CD4-positive, alpha-beta memory T cell (primary cell): ENCODE measurements at regions of chr11 and their contacts with region 1.

Region 1: DNA sequence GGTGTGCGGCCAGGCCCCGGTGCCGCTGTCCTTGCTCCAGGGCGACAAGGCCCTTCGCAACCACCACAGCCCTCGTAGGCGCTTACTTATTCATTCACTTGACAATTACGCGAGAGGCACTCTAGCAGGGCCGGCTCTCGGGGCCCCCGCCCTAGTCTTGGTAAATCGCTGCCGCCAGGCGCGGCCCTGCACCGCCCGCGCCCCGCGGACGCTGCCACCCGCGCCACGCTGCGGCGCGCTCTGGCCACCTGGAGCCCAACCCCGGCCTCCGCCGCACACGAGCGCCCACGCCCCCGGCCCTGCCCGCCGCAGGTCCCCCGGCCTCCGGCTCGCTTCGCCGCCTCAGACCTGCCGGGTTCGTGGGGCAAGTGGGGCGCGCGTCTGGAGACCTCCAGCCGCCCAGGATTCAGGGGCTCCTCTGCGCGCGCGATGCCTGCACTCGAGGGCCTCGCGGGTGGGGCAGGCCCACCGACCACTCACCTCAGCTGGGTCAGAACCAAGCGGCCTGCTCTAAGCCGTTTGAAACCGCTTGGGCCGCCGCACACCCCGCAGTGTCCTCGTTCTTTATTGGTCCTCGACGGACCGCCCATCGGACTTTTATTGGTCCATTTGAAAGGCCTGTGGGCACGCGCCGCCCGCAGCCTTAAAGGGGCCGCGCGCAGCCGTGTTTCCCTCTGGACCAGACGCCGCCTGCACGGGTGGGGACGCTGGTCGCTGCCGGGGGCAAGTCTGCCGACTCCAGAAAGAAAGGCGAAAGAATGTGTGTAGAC is at the start of gene CKAP5:
- DNase-seq: peak; percentile 83 to 88 (median 84)
- H3K4me3 ChIP-seq: peak within 1 kb of the TSS; percentile 85 to 91
- H3K4me3 Mint-ChIP-seq: peak within 1 kb of the TSS; percentile 93 to 99 (median 98)
- H3K27ac ChIP-seq: peak within 1 kb of the TSS; percentile 64
- H3K27ac Mint-ChIP-seq: peak within 1 kb of the TSS; percentile 86 to 98 (median 95)
- H3K4me1 ChIP-seq: peaks cover 29% of the 10 kb centered on the region
- H3K4me1 Mint-ChIP-seq: peaks cover 17 to 46% (median 30%) of the 10 kb centered on the region in 4 donors
- H3K27me3 ChIP-seq: no peaks in the 10 kb centered on the region
- H3K27me3 Mint-ChIP-seq: no peaks in the 10 kb centered on the region
- total RNA-seq, gene CKAP5: 47.8 to 51.4 TPM

Region 2: DNA sequence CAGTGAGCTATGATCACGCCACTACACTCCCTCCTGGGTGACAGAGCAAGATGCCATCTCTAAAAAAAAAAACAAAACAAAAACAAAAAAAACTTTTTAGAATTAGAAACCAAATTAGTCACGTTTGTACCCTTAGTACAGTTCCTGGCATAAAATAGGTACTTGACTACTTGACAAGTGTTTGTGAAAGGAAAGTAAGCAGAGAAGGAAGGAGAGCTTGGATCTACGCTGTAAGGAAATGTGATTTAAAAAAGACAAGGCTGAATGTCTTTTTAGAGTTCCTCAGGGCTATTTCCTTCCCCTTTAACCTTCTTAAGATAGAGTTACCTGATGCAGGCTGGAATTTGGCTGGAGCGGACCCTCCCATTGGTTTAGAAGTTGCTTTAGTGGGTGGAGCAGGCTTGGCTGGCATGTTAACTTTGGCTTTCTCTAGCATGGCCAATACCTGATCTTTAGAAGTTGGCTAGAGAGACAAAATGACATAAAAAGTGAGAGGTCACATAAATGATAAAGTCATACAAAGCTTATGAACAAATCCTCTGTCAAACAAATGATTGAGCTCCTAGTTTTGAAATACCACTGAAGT is 76.2 kb before region 1 on chr11:
- CTCF ChIA-PET with region 1: no interaction called
- POLR2A ChIA-PET with region 1: no interaction called
- intact Hi-C with region 1: no loop called
- DNase-seq: no peak
- H3K4me3 ChIP-seq: no peak overlapping the region
- H3K4me3 Mint-ChIP-seq: no peak overlapping the region
- H3K27ac ChIP-seq: no peak overlapping the region
- H3K27ac Mint-ChIP-seq: no peak overlapping the region
- H3K4me1 ChIP-seq: no peaks in the 10 kb centered on the region
- H3K4me1 Mint-ChIP-seq: no peaks in the 10 kb centered on the region
- H3K27me3 ChIP-seq: no peaks in the 10 kb centered on the region
- H3K27me3 Mint-ChIP-seq: no peaks in the 10 kb centered on the region

Region 3: DNA sequence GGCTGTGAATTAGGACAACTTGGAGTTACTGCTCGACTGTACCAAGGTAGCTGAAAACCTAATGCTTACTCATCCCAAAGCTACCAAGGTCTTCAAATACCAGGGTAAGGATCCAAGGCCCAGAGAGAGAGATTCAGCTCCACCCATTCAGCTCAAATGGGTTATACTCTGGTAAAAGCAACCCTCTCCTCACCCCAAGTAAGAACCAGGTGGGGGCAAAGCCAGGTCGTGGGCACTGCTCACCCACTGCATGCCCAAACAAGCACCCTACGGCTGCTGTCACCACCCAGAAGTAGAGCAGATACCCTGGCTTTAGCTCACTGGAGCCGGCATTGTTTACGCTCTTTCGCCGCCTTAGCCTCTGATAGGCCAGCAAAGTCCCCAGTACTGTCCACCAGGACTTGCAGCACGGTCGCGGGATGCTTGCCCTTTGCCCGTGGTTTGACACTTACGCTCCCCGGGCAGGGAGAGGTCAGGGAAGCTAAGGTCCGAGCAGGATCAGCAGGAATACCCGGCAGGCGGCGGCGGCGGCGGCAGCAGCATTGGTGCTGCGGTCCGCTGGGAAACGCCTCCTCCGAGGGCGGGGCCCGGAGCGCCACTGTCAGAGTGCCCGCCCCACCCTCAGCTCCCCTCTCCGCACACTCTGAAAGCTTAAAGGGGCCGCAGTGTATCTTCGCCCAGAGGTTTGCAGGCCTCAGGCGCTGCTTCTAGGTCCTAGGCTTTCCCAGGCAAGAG is 19.4 kb before region 1 on chr11:
- CTCF ChIA-PET with region 1: interaction called, 4 read pairs
- POLR2A ChIA-PET with region 1: interaction called, 20 read pairs
- intact Hi-C with region 1: loop called (anchors 1 kb)
- DNase-seq: peak; percentile 57 to 71 (median 61)
- H3K4me3 ChIP-seq: peak overlapping the region in 1 of 2 donors; percentile 51
- H3K4me3 Mint-ChIP-seq: peak overlapping the region; percentile 74 to 85 (median 81)
- H3K27ac ChIP-seq: no peak overlapping the region
- H3K27ac Mint-ChIP-seq: peak overlapping the region in 4 of 7 donors; percentile 17 to 76 (median 68)
- H3K4me1 ChIP-seq: peaks cover 16% of the 10 kb centered on the region
- H3K4me1 Mint-ChIP-seq: peaks cover 14 to 36% (median 22%) of the 10 kb centered on the region in 4 donors
- H3K27me3 ChIP-seq: no peaks in the 10 kb centered on the region
- H3K27me3 Mint-ChIP-seq: no peaks in the 10 kb centered on the region

Region 4: DNA sequence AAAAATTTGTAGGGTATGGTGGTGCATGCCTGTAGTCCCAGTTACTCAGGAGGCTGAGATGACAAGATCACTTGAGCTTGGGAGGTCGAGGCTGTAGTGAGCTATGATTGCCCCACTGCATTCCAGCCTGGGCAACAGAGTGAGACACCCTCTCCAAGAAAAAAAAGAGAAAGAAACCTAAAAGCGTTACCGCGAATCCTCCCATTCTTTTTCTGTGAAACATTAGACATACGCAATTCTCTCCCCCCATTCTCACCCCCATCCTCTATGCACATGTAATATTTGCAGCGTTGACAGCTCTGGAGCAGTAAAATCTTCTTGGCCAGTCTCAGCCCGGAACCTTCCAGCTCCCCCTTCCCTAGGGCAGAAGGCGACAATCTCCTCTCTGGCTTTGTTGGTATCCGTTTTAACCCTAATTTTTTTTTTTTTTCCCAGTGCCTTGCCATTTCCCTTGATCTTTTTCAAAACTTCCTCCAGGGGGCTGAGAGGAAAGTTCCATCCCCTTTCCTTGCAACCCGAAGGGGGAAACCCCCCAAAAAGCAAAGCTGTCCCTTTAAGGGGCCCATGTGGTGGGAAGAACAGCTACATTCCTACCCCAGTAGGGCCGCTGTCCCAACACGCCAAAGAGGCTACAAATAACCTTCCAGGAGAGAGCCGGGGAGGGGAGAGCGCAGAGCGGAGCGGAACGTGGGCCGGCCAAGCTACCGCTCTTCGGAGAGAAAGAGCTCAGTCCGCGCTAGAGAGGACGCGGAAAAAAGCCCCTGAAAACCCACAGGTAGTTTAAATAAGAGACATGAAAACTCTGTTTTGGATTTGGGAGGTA is 70.6 kb after region 1 on chr11:
- CTCF ChIA-PET with region 1: no interaction called
- POLR2A ChIA-PET with region 1: no interaction called
- intact Hi-C with region 1: no loop called
- DNase-seq: peak in 1 of 5 donors; percentile 10
- H3K4me3 ChIP-seq: peak overlapping the region; percentile 14 to 56
- H3K4me3 Mint-ChIP-seq: peak overlapping the region; percentile 73 to 91 (median 82)
- H3K27ac ChIP-seq: no peak overlapping the region
- H3K27ac Mint-ChIP-seq: peak overlapping the region in 3 of 7 donors; percentile 48 to 70 (median 60)
- H3K4me1 ChIP-seq: peaks cover 25% of the 10 kb centered on the region
- H3K4me1 Mint-ChIP-seq: peaks cover 16 to 37% (median 28%) of the 10 kb centered on the region in 4 donors
- H3K27me3 ChIP-seq: peaks cover 54% of the 10 kb centered on the region
- H3K27me3 Mint-ChIP-seq: peaks cover 58 to 66% of the 10 kb centered on the region in 2 donors